SK-N-SH (cell line): ENCODE measurements at regions of chr16 and their contacts with region 1.

Region 1: DNA sequence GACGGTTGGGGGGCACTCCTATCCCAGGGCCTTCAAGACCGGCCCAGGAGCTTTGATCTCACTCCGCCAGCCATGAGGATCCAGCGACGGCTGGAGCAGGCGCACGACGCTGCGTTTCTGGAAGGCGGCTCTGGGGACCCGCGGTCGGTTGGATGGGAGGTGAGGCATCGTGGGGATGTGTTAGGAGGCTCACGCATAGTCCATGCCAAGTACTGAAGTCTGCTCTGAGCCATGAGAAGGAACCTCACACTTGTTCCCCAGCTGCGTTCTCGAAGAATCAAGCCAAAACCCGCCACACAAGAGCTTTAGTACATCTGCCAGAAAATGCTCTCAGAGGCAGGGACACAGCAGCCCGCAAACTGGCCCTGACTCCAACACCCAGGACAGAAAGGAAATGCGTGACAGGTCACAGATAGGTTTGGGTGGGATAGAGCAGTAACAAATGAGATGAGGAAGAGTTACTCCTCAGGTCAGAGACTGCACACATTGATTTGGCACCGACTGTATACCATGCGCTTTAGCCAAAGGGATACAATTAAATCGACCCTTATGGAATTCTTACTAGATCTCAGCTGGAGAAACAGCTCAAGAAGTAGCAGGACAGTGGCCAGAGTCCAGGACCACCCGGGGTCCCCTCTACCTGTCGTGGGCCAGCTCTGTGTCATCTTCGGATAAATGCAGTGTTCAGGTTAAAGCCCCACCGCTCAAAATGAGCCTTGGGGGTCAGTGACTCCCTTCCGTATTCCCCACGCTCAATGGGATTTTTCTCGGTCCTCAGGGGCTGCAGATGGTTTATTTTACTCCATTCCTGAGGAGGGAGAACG is 6.7 kb upstream of the GSG1L start:
- DNase-seq: no peak
- H3K4me3 ChIP-seq: peak overlapping the region in 1 of 2 experiments; percentile 43; a peak in 1 of 4 replicates
- H3K27ac ChIP-seq: no peak overlapping the region
- H3K4me1 ChIP-seq: no peaks in the 10 kb centered on the region
- H3K27me3 ChIP-seq: no peaks in the 10 kb centered on the region; the same call in 1 of the 2 replicates
- CTCF ChIP-seq: no peak
- EP300 ChIP-seq: no peak
- RAD21 ChIP-seq: no peak

Region 2: DNA sequence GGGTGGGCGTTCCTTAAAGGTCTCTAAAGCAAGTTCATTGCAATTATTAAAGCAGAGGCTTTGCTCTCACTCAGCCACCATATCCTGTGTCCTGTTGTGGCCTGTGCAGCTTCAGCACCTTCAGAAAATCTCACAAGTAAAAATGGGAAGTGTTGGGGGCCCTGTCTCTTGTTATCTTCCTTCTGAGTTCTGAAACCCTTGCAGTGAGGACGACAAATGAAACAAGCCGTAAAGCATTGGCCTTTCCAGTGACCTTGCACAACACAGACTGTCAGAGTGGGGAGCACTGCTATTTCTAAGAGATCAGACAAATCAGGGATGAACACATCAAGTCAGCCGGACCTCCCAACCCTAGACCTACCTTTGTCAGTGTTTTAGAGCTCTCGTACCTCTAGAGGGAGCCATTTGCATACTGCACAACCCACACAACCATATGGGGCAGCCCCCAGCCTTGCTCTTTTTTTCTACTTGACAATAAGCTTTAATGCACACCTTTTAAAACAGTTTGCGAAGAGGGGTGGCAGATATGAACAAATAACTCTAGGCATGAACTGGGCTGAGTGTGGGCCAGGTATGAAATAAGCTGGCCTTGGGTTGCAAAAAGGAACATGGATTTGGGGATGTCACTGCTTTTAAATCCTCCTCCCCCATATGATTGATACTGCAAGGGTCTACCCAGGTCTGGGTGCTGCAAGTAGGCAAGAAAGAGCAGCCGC is 430.5 kb before region 1 on chr16:
- CTCF ChIA-PET with region 1: interaction called, 38 read pairs
- POLR2A ChIA-PET with region 1: no interaction called
- DNase-seq: peak; percentile 83
- H3K4me3 ChIP-seq: no peak overlapping the region
- H3K27ac ChIP-seq: no peak overlapping the region
- H3K4me1 ChIP-seq: peaks cover 0 to 9% of the 10 kb centered on the region in 2 experiments; a peak in 1 of 4 replicates
- H3K27me3 ChIP-seq: no peaks in the 10 kb centered on the region
- CTCF ChIP-seq: peak; percentile 80
- EP300 ChIP-seq: no peak
- RAD21 ChIP-seq: peak; percentile 87

Region 3: DNA sequence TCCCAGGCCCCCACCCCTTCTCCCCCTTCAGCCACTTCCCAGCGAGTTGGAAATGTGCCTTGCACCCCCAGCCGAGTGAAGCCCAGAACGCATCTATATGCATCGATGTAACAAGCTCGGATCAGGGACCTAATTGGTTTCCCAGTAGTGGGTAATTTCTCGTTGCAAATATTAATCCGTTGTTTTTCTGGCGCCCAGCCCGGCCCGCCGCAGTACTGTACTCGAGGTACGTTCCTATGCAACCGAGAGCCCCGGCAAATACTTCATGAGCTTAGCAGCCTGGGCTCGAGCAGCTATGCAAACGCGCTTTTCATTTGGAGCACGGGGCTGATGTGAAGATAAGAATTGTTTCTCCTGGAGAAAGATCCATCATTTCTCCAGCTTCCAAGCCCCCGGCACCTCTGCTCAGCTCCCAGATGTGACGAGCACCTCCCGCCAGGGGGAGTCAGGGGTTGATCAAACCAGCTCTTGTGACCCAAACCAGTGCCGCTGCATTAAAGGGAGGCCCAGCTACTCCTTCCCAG is 290.5 kb before region 1 on chr16:
- CTCF ChIA-PET with region 1: interaction called, 67 read pairs
- POLR2A ChIA-PET with region 1: interaction called, 3 read pairs
- DNase-seq: peak; percentile 93
- H3K4me3 ChIP-seq: no peak overlapping the region
- H3K27ac ChIP-seq: peak overlapping the region in 1 of 2 experiments; percentile 34; a peak in 2 of 4 replicates
- H3K4me1 ChIP-seq: peaks cover 0 to 37% of the 10 kb centered on the region in 2 experiments; a peak in 1 of 4 replicates
- H3K27me3 ChIP-seq: no peaks in the 10 kb centered on the region
- CTCF ChIP-seq: peak; percentile 54
- EP300 ChIP-seq: no peak
- RAD21 ChIP-seq: peak; percentile 75

Region 4: GRCh38 chr16:27977966-27978365 is 92.2 kb before region 1 on chr16:
- CTCF ChIA-PET with region 1: interaction called, 172 read pairs
- POLR2A ChIA-PET with region 1: no interaction called
- DNase-seq: no peak
- H3K4me3 ChIP-seq: no peak overlapping the region
- H3K27ac ChIP-seq: no peak overlapping the region
- H3K4me1 ChIP-seq: peaks cover 0 to 5% of the 10 kb centered on the region in 2 experiments; a peak in 1 of 4 replicates
- H3K27me3 ChIP-seq: no peaks in the 10 kb centered on the region
- CTCF ChIP-seq: no peak
- EP300 ChIP-seq: no peak
- RAD21 ChIP-seq: no peak

Region 5: DNA sequence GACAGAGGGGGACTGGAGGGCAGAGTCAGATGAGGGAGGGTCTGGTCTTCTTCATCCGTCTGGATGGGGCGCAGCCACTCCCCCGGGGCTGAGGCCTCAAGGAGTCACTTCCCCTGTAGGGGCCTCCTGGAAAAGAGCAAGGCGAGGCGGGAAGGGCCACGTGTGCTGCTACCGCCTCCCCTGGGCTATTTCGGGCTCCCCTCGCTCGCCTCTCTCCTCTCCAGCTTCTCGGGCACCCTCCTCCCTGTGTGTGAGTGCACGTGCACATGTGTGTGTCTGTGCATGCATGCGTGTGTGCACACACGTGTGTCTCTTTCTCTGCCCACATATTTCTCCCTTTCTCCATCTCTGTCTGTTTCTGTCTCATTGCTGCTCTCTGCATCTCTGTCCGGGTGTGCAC is 16.7 kb before region 1 on chr16:
- CTCF ChIA-PET with region 1: interaction called, 10 read pairs
- POLR2A ChIA-PET with region 1: no interaction called
- DNase-seq: no peak
- H3K4me3 ChIP-seq: no peak overlapping the region
- H3K27ac ChIP-seq: no peak overlapping the region
- H3K4me1 ChIP-seq: no peaks in the 10 kb centered on the region
- H3K27me3 ChIP-seq: no peaks in the 10 kb centered on the region
- CTCF ChIP-seq: no peak
- EP300 ChIP-seq: no peak
- RAD21 ChIP-seq: no peak

Region 6: DNA sequence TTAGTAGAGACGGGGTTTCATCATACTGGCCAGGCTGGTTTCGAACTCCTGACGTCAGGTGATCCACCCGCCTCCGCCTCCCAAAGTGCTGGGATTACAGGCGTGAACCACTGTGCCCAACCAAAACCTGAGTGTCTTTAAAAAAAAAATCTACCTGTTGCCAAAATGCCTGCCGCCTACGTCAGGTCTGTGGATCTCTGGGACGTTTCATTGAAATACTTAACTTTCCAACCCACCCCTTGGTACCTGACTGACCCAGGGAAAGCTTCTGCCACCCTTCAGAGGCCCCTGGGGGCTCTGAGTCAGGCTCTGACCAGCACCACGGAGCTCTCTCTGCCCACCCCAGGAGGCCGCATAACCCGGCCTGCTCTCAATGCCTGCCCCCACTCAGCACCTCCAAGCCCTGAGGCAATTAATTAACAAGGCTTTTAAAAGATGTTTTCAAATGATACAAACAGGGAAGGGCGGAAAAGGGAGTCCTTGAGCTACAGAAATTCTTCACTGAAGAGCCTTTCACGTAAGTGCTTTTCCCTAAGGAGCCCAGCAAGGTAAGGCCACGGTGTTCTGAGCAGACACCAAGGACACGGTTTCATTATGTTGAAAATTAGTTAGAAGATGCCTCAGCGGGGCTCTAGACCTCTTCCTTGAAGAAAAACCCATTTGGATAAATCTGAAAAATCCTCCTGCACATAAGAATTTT is 22.7 kb after region 1 on chr16:
- CTCF ChIA-PET with region 1: interaction called, 11 read pairs
- POLR2A ChIA-PET with region 1: no interaction called
- DNase-seq: peak; percentile 60
- H3K4me3 ChIP-seq: no peak overlapping the region
- H3K27ac ChIP-seq: no peak overlapping the region
- H3K4me1 ChIP-seq: no peaks in the 10 kb centered on the region; a peak in 1 of 4 replicates
- H3K27me3 ChIP-seq: no peaks in the 10 kb centered on the region
- CTCF ChIP-seq: no peak
- EP300 ChIP-seq: no peak
- RAD21 ChIP-seq: no peak